Activated CD4-positive, alpha-beta T cell treated with anti-CD3 and anti-CD28 coated beads, Interleukin-2, amount 10 ng/mL, durations not matched to agents 24 days and 14 days (primary cell): ENCODE measurements at regions of chr19 and their contacts with region 1.

Region 1: GRCh38 chr19:6110360-6110977 is at the start of gene RFX2:
- DNase-seq: peak; percentile 100
- H3K4me3 Mint-ChIP-seq: peak within 1 kb of the TSS; percentile 91
- H3K27ac Mint-ChIP-seq: peak within 1 kb of the TSS; percentile 88
- H3K4me1 Mint-ChIP-seq: peaks cover 24% of the 10 kb centered on the region
- H3K27me3 Mint-ChIP-seq: peaks cover 14% of the 10 kb centered on the region
- total RNA-seq, gene RFX2: 10.5 and 10.7 TPM in 2 replicates

Region 2: GRCh38 chr19:5977785-5978605 is 132.5 kb before region 1 on chr19 and contains the start of gene RANBP3:
- intact Hi-C with region 1: loop called (anchors 1 kb)
- DNase-seq: peak; percentile 100
- H3K4me3 Mint-ChIP-seq: peak within 1 kb of the TSS; percentile 94
- H3K27ac Mint-ChIP-seq: peak within 1 kb of the TSS; percentile 93
- H3K4me1 Mint-ChIP-seq: peaks cover 55% of the 10 kb centered on the region
- H3K27me3 Mint-ChIP-seq: no peaks in the 10 kb centered on the region
- total RNA-seq, gene RANBP3: 105 and 114 TPM in 2 replicates

Region 3: DNA sequence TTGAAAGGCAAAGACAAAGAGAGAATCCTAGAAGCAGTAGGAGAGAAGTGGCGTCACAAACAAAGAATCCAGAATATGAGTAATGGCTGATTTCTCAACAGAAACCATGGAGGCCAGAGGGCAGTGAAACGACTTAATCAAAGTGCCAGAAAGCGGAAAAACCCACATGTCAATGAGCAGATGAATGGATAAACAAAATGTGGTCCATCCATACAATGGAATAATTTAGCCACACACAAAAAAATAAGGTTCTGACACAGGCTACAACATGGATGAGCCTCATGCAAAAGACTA is 80.3 kb before region 1 on chr19:
- intact Hi-C with region 1: no loop called
- DNase-seq: no peak
- H3K4me3 Mint-ChIP-seq: no peak overlapping the region
- H3K27ac Mint-ChIP-seq: peak overlapping the region; percentile 12
- H3K4me1 Mint-ChIP-seq: peaks cover 5% of the 10 kb centered on the region
- H3K27me3 Mint-ChIP-seq: no peaks in the 10 kb centered on the region

Region 4: DNA sequence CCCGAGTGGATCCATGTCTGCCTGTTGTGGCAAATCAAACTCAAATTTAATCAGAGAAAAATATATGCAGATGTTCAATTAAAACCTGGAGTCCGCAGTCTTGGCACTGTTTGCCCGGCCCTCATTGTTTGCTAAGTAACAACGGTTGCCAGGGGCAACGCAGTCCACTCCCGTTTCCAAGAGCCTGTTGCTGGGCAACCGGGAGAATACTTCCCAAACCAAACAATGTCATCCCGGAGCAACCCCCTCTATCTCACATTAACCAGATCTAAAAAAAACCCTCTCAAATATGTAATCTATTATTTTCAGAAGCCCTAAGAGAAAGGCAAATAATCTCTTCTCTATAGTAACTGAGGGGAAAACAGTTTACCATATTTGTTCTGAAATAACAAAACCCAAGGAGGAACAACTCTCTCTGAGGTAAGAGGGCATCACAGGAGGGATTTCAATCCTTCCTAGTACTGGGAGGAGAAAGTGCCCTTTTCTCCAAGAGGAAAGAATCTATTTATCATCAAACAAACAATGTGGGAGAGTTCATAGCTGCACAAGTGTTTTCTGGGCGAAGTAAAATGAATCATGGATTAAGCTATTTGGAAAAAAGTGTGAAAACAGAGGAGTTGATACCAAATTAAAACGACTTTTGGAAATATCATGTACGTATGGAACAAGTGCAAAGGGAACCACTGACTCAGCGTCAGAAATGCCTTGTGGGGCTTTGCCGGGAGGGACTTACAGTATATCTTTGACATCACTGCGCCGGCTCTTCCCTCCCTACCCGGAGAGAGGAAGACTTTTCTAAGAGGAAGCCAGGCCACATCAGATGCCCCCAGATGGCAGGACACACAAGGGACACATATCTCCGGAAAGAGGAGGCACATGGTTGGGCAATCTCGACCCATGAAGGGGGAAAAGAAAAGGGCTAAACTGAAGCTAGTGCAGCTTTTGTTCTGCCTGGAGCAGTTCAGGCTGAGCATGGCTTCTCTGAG is 43.5 kb before region 1 on chr19:
- intact Hi-C with region 1: loop called (anchors 2 kb)
- DNase-seq: no peak
- H3K4me3 Mint-ChIP-seq: no peak overlapping the region
- H3K27ac Mint-ChIP-seq: peak overlapping the region; percentile 74
- H3K4me1 Mint-ChIP-seq: peaks cover 39% of the 10 kb centered on the region
- H3K27me3 Mint-ChIP-seq: no peaks in the 10 kb centered on the region

Region 5: GRCh38 chr19:6199240-6199983 is 88.9 kb after region 1 on chr19:
- intact Hi-C with region 1: loop called (anchors 1 kb)
- DNase-seq: peak; percentile 99
- H3K4me3 Mint-ChIP-seq: peak overlapping the region; percentile 100
- H3K27ac Mint-ChIP-seq: peak overlapping the region; percentile 95
- H3K4me1 Mint-ChIP-seq: peaks cover 18% of the 10 kb centered on the region
- H3K27me3 Mint-ChIP-seq: peaks cover 10% of the 10 kb centered on the region